ENCODE measurements at regions of chr11 and their contacts with region 1.

Region 1: GRCh38 chr11:88174709-88175568 is at the start of gene RAB38:
- DNase-seq: peak; percentile 56 to 71
- ATAC-seq: peak; percentile 49 to 82 (median 64)
- H3K4me3 ChIP-seq: peak within 1 kb of the TSS; percentile 66
- H3K27ac ChIP-seq: no peak within 1 kb of the TSS
- H3K4me1 ChIP-seq: no peaks in the 10 kb centered on the region
- H3K27me3 ChIP-seq: no peaks in the 10 kb centered on the region
- CTCF ChIP-seq: no peak
- total RNA-seq, gene RAB38: 0.20 to 0.29 (median 0.28) TPM in 3 of 4 donors, not detected in the other

Region 2: GRCh38 chr11:87954476-87954875 is 220.5 kb before region 1 on chr11:
- intact Hi-C with region 1: no loop called
- DNase-seq: no peak
- ATAC-seq: no peak
- H3K4me3 ChIP-seq: no peak overlapping the region
- H3K27ac ChIP-seq: no peak overlapping the region
- H3K4me1 ChIP-seq: no peaks in the 10 kb centered on the region
- H3K27me3 ChIP-seq: no peaks in the 10 kb centered on the region
- CTCF ChIP-seq: no peak

Region 3: DNA sequence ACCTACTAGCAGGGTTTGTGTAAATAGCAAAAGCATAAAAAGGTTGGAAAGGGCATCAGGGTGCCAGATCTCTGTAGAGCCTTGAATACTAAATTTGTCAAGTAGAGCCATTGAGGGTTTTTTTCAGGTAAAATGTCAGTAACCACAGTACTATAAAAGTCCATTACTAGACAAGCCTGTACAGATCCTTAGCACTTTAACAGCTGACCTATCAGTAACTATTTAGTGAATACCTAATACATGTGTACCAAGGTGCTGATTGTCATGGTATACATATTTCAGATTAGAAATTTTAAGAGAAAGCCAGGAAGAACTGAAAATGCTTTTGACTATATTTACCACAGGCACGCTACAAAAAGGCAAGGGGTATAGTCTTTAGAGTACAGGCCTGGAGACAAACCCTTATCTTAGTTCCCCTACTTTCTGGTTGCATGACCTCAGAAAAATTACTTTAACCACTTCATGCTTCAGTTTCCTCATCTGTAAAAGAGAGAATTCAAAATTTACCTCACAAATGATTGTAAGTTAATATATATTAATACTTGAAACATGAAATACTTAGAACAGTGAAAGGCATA is 57.6 kb before region 1 on chr11:
- intact Hi-C with region 1: loop called in 1 of 2 experiments (anchors 10 kb)
- DNase-seq: no peak
- ATAC-seq: no peak
- H3K4me3 ChIP-seq: no peak overlapping the region
- H3K27ac ChIP-seq: no peak overlapping the region
- H3K4me1 ChIP-seq: no peaks in the 10 kb centered on the region
- H3K27me3 ChIP-seq: no peaks in the 10 kb centered on the region
- CTCF ChIP-seq: no peak

Measured in psoas muscle (tissue), 8 donors.